Activated CD4-positive, alpha-beta T cell treated with anti-CD3 and anti-CD28 coated beads for 36 hours (primary cell): ENCODE measurements at regions of chr16 and their contacts with region 1.

Region 1: GRCh38 chr16:85898521-85899442 is at the start of gene IRF8:
- DNase-seq: peak; percentile 92
- ATAC-seq: peak; percentile 81
- H3K4me3 Mint-ChIP-seq: peak within 1 kb of the TSS; percentile 78
- H3K27ac Mint-ChIP-seq: peak within 1 kb of the TSS; percentile 92
- H3K4me1 Mint-ChIP-seq: peaks cover 47% of the 10 kb centered on the region
- H3K27me3 Mint-ChIP-seq: peaks cover 3% of the 10 kb centered on the region
- total RNA-seq, gene IRF8: 227 to 250 TPM

Region 2: DNA sequence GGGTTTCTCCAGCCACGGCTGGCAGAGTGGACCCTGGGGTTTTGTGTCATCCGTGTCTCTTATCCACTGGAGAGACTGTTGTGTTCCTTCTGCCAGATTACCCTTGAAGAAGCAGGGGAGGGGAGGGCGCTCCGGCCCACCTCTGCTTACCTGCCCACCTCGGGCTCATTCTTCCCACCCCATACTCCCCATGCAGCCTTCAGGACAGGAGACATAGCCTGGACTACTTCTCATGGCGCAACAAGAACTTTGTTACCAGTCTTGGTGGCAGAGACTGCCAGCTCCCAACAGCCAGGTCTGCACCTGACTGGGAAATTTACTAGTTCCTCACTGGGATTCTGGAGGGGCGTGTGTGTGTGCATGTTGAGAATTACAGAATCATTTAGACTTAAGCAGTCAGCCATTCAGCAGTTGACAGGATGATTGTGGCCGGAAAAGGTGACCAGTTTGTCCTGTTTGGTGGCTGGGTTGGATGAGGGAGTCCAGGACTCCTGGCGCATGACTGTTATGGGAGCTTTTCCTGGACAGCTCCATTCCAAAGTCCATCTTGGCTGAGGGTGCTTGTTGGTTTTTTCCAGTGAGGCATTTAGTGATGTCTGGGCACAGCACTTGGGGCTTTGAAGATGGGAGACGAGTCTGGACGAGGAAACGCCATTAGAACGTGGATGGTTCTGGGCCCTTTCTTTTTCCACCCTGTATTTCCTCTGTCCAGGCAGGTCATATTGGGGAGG is 276.9 kb before region 1 on chr16:
- CTCF ChIA-PET with region 1: no interaction called
- POLR2A ChIA-PET with region 1: no interaction called
- intact Hi-C with region 1: no loop called
- DNase-seq: no peak
- ATAC-seq: no peak
- H3K4me3 Mint-ChIP-seq: no peak overlapping the region
- H3K27ac Mint-ChIP-seq: no peak overlapping the region
- H3K4me1 Mint-ChIP-seq: peaks cover 15% of the 10 kb centered on the region
- H3K27me3 Mint-ChIP-seq: peaks cover 2% of the 10 kb centered on the region

Region 3: DNA sequence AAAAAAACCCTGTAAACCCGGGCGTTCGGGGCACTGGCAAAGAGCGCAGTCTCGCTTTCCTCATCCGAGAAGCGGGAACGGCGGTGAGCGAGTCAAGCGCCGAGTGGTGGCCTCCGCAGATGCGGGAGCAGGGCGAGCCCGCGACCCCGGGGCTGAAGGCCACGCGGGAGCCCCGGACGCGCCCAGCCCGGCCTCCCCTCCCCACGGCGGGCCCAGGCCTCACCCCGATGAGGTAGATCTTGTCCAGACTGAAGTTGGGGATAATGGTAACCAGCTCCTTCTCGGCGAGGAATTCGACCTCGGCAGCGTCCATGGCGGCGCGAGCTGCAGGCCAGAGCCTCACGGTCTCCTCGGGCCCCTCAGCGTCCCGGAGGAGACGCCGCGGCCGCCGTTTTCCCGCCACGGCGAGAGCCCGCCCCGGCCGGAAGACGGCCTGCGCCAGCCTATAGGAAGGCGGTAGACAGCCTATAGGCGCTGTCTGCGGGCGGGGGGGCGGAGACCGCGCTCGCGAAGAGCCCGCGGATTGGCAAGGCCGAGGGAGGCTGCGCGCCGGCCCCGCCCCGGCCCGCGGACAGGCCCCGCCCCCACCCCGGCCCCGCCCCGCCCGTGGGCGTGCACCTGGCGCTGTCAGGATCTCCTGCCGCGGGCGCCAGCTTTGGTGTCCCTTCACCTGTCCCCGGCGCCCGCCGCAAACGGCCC is 210.0 kb before region 1 on chr16 and contains the start of gene GINS2:
- CTCF ChIA-PET with region 1: no interaction called
- POLR2A ChIA-PET with region 1: no interaction called
- intact Hi-C with region 1: loop called in 1 of 2 experiments (anchors 5 kb)
- DNase-seq: peak; percentile 96
- ATAC-seq: peak; percentile 100
- H3K4me3 Mint-ChIP-seq: peak within 1 kb of the TSS; percentile 88
- H3K27ac Mint-ChIP-seq: peak within 1 kb of the TSS; percentile 93
- H3K4me1 Mint-ChIP-seq: peaks cover 18% of the 10 kb centered on the region
- H3K27me3 Mint-ChIP-seq: peaks cover 4% of the 10 kb centered on the region
- total RNA-seq, gene GINS2: 86.4 to 87.5 TPM

Region 4: DNA sequence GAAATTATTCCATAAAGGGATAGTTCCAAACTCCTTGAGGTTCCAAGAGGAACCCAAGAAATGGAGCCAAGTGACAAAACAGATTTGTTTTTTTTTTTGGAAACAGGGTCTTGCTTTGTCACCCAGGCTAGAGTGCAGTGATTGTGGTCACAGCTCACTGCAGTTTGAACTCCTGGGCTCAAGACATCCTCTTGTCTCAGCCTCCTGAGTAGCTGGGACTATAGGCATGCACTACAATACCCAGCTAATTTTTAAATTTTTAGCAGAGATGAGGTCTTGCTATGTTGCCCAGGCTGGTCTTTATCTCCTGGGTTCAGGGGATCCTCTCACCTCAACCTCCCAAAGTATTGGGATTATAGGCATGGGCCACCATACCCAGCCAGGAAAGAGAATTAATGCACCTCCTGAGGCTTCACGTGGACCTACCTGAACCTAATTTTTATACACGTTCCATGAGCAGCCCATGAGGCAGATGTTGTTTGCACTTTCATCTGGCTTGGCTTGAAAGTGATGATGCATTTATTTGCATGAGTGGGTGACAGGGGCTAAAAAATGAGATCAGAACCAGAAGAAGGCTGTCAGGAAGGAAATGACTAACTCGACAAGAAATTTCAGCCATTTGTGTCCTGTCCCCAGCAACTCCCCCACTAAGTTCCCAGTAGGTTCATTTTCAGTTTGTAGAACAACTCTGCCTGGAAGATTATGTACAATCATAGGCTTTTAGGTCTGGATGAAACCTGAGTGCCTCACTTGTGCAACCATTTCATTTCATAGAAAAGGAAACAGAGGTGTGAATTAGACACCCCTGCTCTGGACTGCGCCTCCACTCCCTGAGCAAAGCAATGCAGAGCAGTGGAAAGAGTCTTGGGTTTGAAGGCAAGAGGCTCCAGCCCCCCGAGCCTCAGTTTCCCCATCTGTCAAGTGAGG is 10.1 kb before region 1 on chr16:
- CTCF ChIA-PET with region 1: no interaction called
- POLR2A ChIA-PET with region 1: no interaction called
- intact Hi-C with region 1: loop called (anchors 1 kb)
- DNase-seq: peak; percentile 61
- ATAC-seq: peak; percentile 92
- H3K4me3 Mint-ChIP-seq: peak overlapping the region; percentile 7
- H3K27ac Mint-ChIP-seq: peak overlapping the region; percentile 77
- H3K4me1 Mint-ChIP-seq: peaks cover 39% of the 10 kb centered on the region
- H3K27me3 Mint-ChIP-seq: peaks cover 31% of the 10 kb centered on the region

Region 5: GRCh38 chr16:85916141-85916890 is 17.5 kb after region 1 on chr16:
- CTCF ChIA-PET with region 1: interaction called, 13 read pairs
- POLR2A ChIA-PET with region 1: interaction called, 5 read pairs
- intact Hi-C with region 1: no loop called
- DNase-seq: no peak
- ATAC-seq: no peak
- H3K4me3 Mint-ChIP-seq: no peak overlapping the region
- H3K27ac Mint-ChIP-seq: peak overlapping the region; percentile 61
- H3K4me1 Mint-ChIP-seq: peaks cover 7% of the 10 kb centered on the region
- H3K27me3 Mint-ChIP-seq: no peaks in the 10 kb centered on the region

Region 6: GRCh38 chr16:86016201-86016871 is 117.6 kb after region 1 on chr16:
- CTCF ChIA-PET with region 1: interaction called, 6 read pairs
- POLR2A ChIA-PET with region 1: no interaction called
- intact Hi-C with region 1: loop called (anchors 2 kb)
- DNase-seq: peak; percentile 64
- ATAC-seq: peak; percentile 75
- H3K4me3 Mint-ChIP-seq: no peak overlapping the region
- H3K27ac Mint-ChIP-seq: no peak overlapping the region
- H3K4me1 Mint-ChIP-seq: peaks cover 20% of the 10 kb centered on the region
- H3K27me3 Mint-ChIP-seq: peaks cover 34% of the 10 kb centered on the region